HEK293T (cell line): ENCODE measurements at regions of chr6 and their contacts with region 1.

Region 1: DNA sequence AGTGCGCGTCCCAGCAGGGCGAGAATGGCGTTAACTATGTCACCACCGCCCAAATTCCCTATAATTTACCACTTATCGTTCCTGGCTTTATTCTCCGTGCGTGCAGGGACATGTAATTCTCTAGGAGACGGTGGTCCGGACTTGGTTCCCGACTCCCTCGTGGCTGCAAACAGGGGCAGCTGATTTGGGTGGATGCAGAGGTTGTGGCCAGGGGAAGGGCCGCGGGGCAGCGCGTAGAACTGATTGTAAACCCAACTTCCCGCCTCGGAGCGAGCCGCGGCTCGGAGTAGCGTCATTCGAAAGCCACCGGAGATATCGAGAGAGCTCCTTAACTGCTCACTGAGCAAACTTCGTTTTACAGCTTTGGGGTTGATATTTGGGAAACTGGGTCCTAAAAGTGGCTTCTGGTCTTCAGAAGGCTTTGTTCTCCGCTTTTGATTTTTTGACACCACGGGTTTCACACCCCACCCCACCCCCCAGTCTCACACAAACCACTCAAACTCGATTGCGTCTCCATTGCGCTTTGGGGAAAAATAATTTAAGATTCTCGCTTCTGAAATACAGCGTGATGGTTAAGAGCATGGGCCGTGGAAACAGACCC is 17.5 kb upstream of the ZSCAN9 start:
- DNase-seq: peak; percentile 66

Region 2: GRCh38 chr6:28161410-28162079 is 46.1 kb before region 1 on chr6:
- CTCF ChIA-PET with region 1: no interaction called
- POLR2A ChIA-PET with region 1: interaction called, 12 read pairs
- DNase-seq: peak; percentile 93

Region 3: GRCh38 chr6:28322661-28323060 is 115.1 kb after region 1 on chr6:
- CTCF ChIA-PET with region 1: no interaction called
- POLR2A ChIA-PET with region 1: no interaction called
- DNase-seq: no peak

Region 4: DNA sequence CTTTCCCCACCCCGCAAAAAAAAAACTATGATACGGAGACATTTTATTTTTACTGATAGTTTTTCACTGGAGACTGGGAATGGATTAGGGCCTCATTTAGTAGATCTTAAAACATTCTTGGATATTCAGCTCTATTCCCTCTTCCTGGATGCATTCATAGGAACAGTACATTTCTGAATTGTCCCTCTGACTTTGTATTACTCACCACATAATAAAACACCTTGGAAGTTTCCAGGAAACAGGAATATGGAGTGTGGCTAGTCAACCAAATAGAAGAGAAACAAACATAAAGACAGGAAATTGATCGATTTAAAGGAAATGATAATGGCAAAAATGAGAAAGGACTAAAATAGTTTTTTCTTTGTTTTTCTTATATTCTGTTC is 465.8 kb after region 1 on chr6:
- CTCF ChIA-PET with region 1: no interaction called
- POLR2A ChIA-PET with region 1: no interaction called
- DNase-seq: no peak